Panc1 (cell line): ENCODE measurements at regions of chr10 and their contacts with region 1.

Region 1: GRCh38 chr10:4051011-4051640 is 266.1 kb upstream of the KLF6 start:
- DNase-seq: no peak
- ATAC-seq: no peak
- H3K4me3 ChIP-seq: no peak overlapping the region
- H3K27ac ChIP-seq: peak overlapping the region; percentile 75
- H3K4me1 ChIP-seq: no peaks in the 10 kb centered on the region
- H3K27me3 ChIP-seq: no peaks in the 10 kb centered on the region
- CTCF ChIP-seq: no peak

Region 2: GRCh38 chr10:3955493-3955892 is 95.6 kb before region 1 on chr10:
- CTCF ChIA-PET with region 1: no interaction called
- POLR2A ChIA-PET with region 1: no interaction called
- in situ Hi-C with region 1: no loop called
- intact Hi-C with region 1: loop called (anchors 10 kb)
- DNase-seq: no peak
- ATAC-seq: peak; percentile 85
- H3K4me3 ChIP-seq: no peak overlapping the region
- H3K27ac ChIP-seq: peak overlapping the region; percentile 96
- H3K4me1 ChIP-seq: peaks cover 43% of the 10 kb centered on the region
- H3K27me3 ChIP-seq: no peaks in the 10 kb centered on the region
- CTCF ChIP-seq: no peak